ENCODE measurements at regions of chr15 and their contacts with region 1.

Region 1: GRCh38 chr15:43225201-43225949 is 4.6 kb upstream of the EPB42 start:
- DNase-seq: peak; percentile 63
- H3K4me3 Mint-ChIP-seq: no peak overlapping the region
- H3K27ac Mint-ChIP-seq: no peak overlapping the region
- H3K4me1 Mint-ChIP-seq: peaks cover 2% of the 10 kb centered on the region
- H3K27me3 Mint-ChIP-seq: peaks cover 13% of the 10 kb centered on the region

Region 2: GRCh38 chr15:43204016-43204901 is 21.1 kb before region 1 on chr15:
- CTCF ChIA-PET with region 1: interaction called, 16 read pairs
- DNase-seq: peak; percentile 70
- H3K4me3 Mint-ChIP-seq: no peak overlapping the region
- H3K27ac Mint-ChIP-seq: no peak overlapping the region
- H3K4me1 Mint-ChIP-seq: no peaks in the 10 kb centered on the region
- H3K27me3 Mint-ChIP-seq: peaks cover 38% of the 10 kb centered on the region

Region 3: DNA sequence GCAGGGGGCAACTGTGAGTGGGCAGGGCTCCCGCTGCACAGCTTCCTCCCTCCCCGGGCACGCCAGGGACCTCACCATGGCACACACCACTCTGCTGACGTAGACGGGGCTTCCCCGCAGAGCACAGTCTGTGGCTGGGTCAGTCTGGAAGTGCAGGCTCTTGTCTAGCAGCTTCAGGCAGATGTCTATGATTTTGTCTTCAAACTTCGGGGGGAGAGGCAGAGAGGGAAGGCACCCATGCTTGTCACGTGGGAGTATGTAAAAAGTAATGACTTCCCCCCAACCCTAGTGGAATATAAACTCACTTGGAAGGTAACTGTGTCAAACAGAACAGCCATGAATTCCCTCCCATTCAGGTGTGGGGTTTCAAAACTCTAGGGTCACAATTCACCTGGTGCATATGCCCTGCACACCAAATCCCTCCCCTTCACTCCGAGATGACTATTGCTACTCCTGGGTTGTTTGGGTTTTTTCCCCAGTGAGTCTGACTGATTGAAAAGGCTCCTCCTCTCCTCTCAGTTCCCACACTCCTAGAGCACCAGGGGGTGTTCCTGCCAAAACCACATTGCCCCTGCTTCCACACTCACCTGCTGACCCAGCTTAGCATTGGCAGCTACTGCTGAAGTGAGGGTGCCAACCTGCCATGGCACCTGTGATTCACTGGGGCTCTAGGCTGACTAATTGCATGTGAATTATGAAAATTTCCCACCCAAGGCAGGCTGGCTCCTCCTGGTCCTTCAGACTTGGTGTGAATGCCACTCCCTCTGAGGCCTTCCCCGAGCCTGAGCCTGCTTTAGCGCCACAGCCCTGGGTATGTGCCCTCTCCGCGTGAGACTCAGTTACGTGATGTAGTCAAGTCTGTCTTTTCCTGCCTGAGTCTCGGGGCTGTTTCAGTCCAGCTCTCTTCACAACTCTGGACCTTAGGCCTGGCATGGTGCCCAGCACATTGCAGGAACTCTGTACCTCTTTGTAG is 28.3 kb after region 1 on chr15:
- CTCF ChIA-PET with region 1: interaction called, 16 read pairs
- DNase-seq: no peak
- H3K4me3 Mint-ChIP-seq: no peak overlapping the region
- H3K27ac Mint-ChIP-seq: no peak overlapping the region
- H3K4me1 Mint-ChIP-seq: peaks cover 26% of the 10 kb centered on the region
- H3K27me3 Mint-ChIP-seq: peaks cover 37% of the 10 kb centered on the region

Region 4: GRCh38 chr15:43268111-43269105 is 43.0 kb after region 1 on chr15:
- CTCF ChIA-PET with region 1: interaction called, 111 read pairs
- DNase-seq: peak; percentile 32
- H3K4me3 Mint-ChIP-seq: no peak overlapping the region
- H3K27ac Mint-ChIP-seq: no peak overlapping the region
- H3K4me1 Mint-ChIP-seq: peaks cover 16% of the 10 kb centered on the region
- H3K27me3 Mint-ChIP-seq: peaks cover 50% of the 10 kb centered on the region

Region 5: DNA sequence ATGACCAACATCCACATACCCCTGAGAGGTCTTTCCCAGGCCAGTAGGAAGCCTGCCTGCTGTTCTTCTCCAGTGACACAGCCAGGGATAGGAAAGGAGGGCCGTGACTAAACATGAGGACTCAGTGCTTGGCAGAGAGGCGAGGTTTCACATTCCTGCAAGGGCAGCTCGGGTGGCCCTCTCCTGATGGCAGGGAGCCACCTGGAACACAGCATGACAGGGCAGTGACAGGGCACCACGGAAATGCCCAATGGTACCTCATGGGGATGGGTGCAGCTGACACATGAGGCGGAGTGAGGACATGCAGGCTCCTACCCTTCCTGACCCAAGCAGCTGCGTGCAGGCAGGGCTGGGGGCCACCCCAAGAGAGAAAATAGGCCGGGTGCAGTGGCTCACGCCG is 48.8 kb after region 1 on chr15:
- CTCF ChIA-PET with region 1: interaction called, 111 read pairs
- DNase-seq: no peak
- H3K4me3 Mint-ChIP-seq: no peak overlapping the region
- H3K27ac Mint-ChIP-seq: no peak overlapping the region
- H3K4me1 Mint-ChIP-seq: peaks cover 16% of the 10 kb centered on the region
- H3K27me3 Mint-ChIP-seq: peaks cover 29% of the 10 kb centered on the region

Measured in activated naive CD4-positive, alpha-beta T cell treated with anti-CD3 and anti-CD28 coated beads, Interleukin-2, amount 10 ng/mL, durations not matched to agents 7 days and 5 days (primary cell).